Right ventricle myocardium superior (tissue), 1 donor: ENCODE measurements at regions of chr2 and their contacts with region 1.

Region 1: DNA sequence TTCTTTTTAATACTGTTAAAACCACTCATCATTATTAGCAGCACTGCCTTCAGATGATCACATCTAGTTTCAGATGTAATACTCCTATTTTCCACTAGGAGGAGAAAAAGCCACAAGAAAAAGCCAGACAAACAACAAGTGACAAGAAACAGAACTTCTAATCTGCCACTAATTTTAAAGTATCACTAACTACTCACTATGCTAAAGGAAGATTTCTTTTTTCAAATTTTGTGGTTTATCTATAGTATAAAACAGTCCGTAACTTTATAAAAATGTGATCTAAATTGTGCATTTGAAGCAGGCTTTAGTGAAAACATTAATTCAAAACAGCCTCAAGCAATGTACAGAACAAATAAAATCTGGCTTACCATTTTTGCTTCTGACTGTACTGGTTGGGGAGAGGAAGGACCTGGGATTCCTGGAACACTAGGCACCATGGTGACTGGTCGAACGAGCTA is 56.8 kb downstream of the ATF2 start:
- DNase-seq: no peak
- ATAC-seq: peak; percentile 67

Region 2: DNA sequence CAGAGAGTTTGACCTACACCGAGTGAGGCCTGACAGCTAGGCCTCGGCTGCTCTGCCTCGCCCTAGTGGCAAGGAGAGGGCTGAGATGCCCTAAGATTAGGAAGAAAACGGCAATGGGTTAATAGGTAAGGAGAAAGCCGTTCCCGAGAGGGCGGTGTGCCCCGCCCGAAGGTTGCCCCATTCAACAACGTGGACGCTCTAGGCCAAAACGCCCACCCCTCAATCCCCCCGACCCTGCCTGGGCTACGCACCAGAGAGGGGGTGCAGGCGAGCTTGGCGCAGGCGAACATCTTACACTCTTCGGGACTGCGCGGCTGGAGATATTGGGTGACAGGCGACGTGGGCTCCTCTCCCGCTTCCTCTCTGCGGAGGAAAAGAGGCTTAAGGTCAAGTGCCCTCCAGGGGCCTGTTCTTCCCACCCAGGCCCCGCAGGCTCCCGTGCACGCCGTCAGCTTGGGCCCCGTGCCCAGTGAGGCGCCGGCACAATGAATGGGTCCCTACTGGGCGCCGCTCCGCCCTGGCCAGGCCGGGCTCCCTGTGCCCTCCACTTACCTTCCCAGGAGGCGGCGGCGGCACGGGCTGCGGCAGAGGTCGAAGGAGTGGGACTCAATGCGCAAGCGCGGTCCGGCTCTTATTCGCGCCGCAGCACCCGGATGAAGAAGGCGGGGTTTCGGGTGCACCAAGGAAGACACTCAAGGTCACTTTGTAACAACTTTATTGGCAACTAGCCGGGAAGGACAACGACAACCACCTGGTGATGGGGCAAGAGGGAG is 70.1 kb after region 1 on chr2 and contains the start of gene ATP5MC3:
- intact Hi-C with region 1: loop called (anchors 5 kb)
- DNase-seq: peak; percentile 98
- ATAC-seq: peak; percentile 97
- total RNA-seq, gene ATP5MC3: 1,284 TPM

Region 3: GRCh38 chr2:175834477-175834876 is 723.2 kb after region 1 on chr2:
- intact Hi-C with region 1: no loop called
- DNase-seq: no peak
- ATAC-seq: no peak